ENCODE measurements at regions of chr14 and their contacts with region 1.

Region 1: DNA sequence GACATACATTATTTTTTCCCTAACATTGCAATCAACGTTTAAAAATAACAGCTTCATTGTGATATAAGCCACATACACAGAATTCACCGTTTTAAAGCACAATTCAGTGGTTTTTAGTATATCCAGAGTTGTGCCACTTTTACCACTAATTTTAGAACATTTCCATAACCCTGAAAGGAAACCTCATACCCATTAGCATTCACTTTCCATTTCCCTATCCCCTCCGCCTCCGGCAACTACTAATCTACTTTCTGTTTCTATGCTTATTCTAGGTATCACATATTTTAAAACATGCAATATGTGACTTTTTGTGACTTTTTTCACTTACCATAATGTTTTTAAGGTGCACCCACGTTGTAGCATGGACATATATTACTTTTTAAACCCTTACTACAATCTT is 55.6 kb upstream of the ISM2 start:
- DNase-seq: no peak
- CTCF ChIP-seq: no peak

Region 2: GRCh38 chr14:77301103-77301502 is 253.1 kb before region 1 on chr14:
- CTCF ChIA-PET with region 1: interaction called, 32 read pairs
- POLR2A ChIA-PET with region 1: no interaction called
- DNase-seq: peak; percentile 73
- CTCF ChIP-seq: peak; percentile 51

Region 3: GRCh38 chr14:77542421-77543239 is 11.6 kb before region 1 on chr14:
- CTCF ChIA-PET with region 1: interaction called, 13 read pairs
- POLR2A ChIA-PET with region 1: no interaction called
- DNase-seq: no peak
- CTCF ChIP-seq: no peak

Region 4: DNA sequence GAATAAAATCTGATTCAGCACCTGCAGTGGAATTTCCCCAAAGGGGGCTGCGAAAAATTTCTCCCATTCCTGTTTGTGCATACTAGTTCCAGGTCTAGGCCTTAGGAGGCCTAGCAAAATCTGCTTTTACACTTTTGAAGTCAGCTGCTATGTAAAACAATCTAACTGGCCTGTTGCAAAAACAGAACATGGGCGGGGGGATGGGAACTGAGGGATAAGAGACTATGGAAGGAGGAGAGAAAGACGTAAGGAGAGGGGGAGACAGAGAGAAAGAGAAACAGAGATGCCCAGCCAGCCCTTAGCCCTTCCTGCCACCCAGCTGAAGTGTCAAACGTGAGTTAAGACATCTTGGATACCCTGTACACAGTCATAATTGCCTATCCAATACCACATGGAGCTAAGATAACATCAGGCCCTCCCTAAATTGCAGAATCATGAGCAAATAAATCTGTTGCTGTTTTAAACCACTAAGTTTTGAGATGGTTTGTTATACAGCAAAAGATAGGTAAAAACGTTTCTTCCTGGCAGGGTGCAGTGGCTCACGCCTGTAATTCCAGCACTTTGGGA is 16.6 kb after region 1 on chr14:
- CTCF ChIA-PET with region 1: interaction called, 10 read pairs
- POLR2A ChIA-PET with region 1: no interaction called
- DNase-seq: no peak
- CTCF ChIP-seq: no peak

Measured in GM10248 (cell line).